IMR-90 (cell line): ENCODE measurements at regions of chr16 and their contacts with region 1.

Region 1: GRCh38 chr16:23835390-23836077 is at the start of gene PRKCB:
- DNase-seq: peak; percentile 14
- ATAC-seq: peak; percentile 95
- H3K4me3 ChIP-seq: no peak within 1 kb of the TSS
- H3K27ac ChIP-seq: no peak within 1 kb of the TSS
- H3K4me1 ChIP-seq: no peaks in the 10 kb centered on the region
- H3K27me3 ChIP-seq: peaks cover 19% of the 10 kb centered on the region
- CTCF ChIP-seq: no peak
- POLR2A ChIP-seq: no peak
- RAD21 ChIP-seq: no peak
- total RNA-seq, gene PRKCB: under 0.01 TPM in 1 of 2 replicates, not detected in the other

Region 2: DNA sequence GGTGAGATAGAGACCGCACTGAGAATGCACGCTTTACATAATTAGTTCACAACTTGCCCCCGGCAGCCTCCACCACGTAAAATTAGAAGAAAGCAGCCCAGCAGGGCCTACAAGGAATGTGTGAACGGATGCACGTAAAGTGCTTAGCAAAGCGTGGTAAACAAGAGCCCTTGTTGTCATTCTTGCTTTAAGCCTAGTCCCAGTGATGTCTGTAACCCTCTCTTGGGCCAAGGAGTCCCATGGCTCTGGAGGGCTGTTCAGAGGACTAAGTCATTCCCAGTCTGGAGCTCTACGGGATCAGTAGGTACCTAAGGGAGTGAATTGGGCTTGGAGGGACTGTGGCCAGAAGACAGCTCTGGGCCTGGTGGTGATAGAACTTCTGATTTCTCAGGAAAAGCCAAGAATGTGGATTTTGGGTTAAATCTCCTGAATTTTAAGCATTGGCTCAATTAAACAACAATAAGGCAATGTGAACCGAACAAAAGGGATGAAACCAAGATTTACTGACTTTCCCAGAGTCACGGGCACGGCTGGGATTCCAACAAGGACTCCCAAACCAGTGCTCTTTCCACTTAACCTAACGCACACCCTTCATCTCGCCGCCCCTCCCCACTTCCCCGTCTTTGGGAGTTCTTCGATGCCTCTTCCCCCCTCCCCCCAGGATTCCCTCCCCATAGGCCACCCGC is 81.5 kb before region 1 on chr16:
- CTCF ChIA-PET with region 1: no interaction called
- POLR2A ChIA-PET with region 1: no interaction called
- dilution Hi-C with region 1: no loop called
- in situ Hi-C with region 1: no loop called
- intact Hi-C with region 1: no loop called
- DNase-seq: no peak
- ATAC-seq: no peak
- H3K4me3 ChIP-seq: no peak overlapping the region
- H3K27ac ChIP-seq: no peak overlapping the region
- H3K4me1 ChIP-seq: no peaks in the 10 kb centered on the region; the same call in 1 of the 2 replicates
- H3K27me3 ChIP-seq: peaks cover 25% of the 10 kb centered on the region
- CTCF ChIP-seq: no peak
- POLR2A ChIP-seq: no peak
- RAD21 ChIP-seq: no peak

Region 3: DNA sequence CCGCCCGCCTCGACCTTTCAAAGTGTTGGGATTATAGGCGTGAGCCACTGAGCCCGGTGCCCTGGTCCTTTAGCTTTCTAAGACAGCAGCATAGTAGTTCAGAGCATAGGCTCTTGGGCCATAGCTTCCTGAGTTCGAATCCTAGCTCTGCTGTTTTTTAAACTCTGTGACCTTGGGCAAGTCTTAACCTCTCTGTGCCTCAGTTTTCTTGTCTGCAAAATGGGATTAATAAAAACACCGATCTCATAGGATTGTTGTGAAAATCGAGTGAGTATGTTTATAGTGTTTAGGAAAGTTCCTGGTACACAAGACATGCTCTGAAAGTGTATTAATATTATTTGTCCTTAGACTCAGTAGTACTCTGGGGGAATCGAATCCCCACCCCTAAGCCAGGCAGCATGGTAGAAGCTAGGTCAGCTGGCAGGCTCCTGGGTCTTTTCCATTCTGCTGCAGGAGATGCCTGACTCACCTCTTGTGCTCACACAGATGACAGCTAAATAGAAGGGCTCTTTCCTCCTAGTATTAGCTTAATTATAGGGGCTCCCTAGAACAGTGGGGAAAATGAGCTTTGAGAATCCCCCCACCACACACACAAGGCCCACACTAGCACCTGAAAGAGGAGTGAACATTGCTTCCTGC is 44.3 kb after region 1 on chr16:
- CTCF ChIA-PET with region 1: no interaction called
- POLR2A ChIA-PET with region 1: no interaction called
- dilution Hi-C with region 1: no loop called
- in situ Hi-C with region 1: no loop called
- intact Hi-C with region 1: no loop called
- DNase-seq: no peak
- ATAC-seq: no peak
- H3K4me3 ChIP-seq: no peak overlapping the region
- H3K27ac ChIP-seq: no peak overlapping the region
- H3K4me1 ChIP-seq: no peaks in the 10 kb centered on the region
- H3K27me3 ChIP-seq: no peaks in the 10 kb centered on the region
- CTCF ChIP-seq: no peak
- POLR2A ChIP-seq: no peak
- RAD21 ChIP-seq: no peak

Region 4: DNA sequence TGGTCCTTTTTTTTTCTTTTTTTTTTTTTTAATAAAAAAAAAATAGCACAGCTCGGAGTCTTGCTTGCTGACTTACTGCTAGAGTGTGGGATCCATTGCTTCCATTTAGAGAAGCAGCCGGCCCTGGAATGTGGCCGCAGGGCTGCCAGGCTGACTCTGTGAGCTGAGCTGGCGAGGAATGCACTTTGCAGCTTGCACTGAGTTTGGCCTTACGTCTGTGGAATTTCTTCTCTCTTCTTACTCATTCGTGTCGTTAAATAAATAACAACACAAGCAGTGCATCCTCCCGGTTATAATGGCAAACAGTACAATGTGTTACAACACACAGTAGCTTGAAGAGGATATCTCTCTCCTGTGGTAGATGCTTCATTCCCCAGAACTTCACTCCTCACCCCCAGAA is 69.5 kb after region 1 on chr16:
- CTCF ChIA-PET with region 1: no interaction called
- POLR2A ChIA-PET with region 1: no interaction called
- dilution Hi-C with region 1: no loop called
- in situ Hi-C with region 1: no loop called
- intact Hi-C with region 1: loop called (anchors 5 kb)
- DNase-seq: peak; percentile 70
- ATAC-seq: peak; percentile 100
- H3K4me3 ChIP-seq: no peak overlapping the region
- H3K27ac ChIP-seq: no peak overlapping the region
- H3K4me1 ChIP-seq: no peaks in the 10 kb centered on the region
- H3K27me3 ChIP-seq: no peaks in the 10 kb centered on the region
- CTCF ChIP-seq: no peak
- POLR2A ChIP-seq: no peak
- RAD21 ChIP-seq: no peak